Caco-2 (cell line): ENCODE measurements at regions of chr5 and their contacts with region 1.

Region 1: DNA sequence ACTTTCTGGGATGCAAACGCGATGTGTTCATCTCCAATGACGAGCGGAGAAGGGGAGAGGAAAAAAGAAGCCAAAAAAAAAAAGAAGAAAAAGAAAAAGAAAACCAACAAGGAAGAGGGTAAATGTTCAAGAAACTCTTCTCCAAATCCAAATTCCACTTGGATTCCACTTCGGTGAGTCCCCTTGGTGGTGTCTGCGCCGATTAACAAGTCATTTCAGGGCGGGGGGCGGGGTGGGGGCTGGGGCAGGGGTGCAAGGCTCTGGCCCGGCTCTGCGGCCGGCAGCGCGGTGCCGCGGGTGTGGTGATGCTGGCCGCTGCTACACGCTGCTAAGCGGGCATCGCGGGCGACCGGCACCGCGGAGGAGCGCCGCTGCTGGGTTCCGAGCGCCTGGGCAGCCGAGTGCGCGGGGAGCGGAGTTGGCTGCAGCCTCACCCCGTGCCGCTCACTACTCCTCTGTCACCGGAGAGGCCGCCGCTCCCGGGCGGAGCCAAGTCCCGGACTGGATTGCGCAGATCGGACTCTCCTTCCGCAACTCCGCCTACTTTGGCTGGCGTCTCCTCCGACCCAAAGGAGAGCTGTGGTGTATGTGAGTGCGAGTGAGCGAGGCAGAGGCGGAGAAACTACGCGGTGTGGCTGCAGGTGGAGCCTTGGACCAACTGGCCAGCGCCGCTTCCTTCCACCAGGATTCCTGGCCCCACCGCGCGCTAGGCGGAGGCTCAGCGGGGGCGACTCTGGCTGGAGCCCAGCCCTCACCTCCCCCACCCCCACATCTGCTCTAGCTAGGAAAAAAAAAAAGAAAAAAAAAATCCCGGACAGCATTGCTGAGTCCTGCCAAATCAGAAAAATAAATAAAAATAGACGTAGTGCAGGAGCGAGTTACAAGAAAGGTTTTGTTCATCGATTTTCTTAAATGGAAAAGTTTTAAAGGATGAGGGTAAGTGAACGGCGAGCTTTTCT is at the start of gene SEMA6A:
- DNase-seq: peak; percentile 92 to 93
- H3K4me3 ChIP-seq: peak within 1 kb of the TSS; percentile 61
- H3K4me3 Mint-ChIP-seq: peak within 1 kb of the TSS; percentile 92
- H3K27ac Mint-ChIP-seq: peak within 1 kb of the TSS; percentile 45
- H3K4me1 ChIP-seq: peaks cover 20% of the 10 kb centered on the region
- H3K4me1 Mint-ChIP-seq: peaks cover 21% of the 10 kb centered on the region
- H3K27me3 ChIP-seq: no peaks in the 10 kb centered on the region; the same call in 1 of the 2 replicates
- H3K27me3 Mint-ChIP-seq: peaks cover 2% of the 10 kb centered on the region
- CTCF ChIP-seq: no peak
- total RNA-seq, gene SEMA6A: 18.3 and 26.3 TPM in 2 replicates

Region 2: GRCh38 chr5:116546033-116546728 is 28.5 kb before region 1 on chr5:
- CTCF ChIA-PET with region 1: no interaction called
- POLR2A ChIA-PET with region 1: no interaction called
- intact Hi-C with region 1: loop called (anchors 1 kb)
- DNase-seq: peak; percentile 82 to 91
- H3K4me3 ChIP-seq: no peak overlapping the region
- H3K4me3 Mint-ChIP-seq: peak overlapping the region; percentile 16
- H3K27ac Mint-ChIP-seq: peak overlapping the region; percentile 38
- H3K4me1 ChIP-seq: peaks cover 46% of the 10 kb centered on the region
- H3K4me1 Mint-ChIP-seq: peaks cover 33% of the 10 kb centered on the region
- H3K27me3 ChIP-seq: no peaks in the 10 kb centered on the region
- H3K27me3 Mint-ChIP-seq: no peaks in the 10 kb centered on the region
- CTCF ChIP-seq: no peak

Region 3: DNA sequence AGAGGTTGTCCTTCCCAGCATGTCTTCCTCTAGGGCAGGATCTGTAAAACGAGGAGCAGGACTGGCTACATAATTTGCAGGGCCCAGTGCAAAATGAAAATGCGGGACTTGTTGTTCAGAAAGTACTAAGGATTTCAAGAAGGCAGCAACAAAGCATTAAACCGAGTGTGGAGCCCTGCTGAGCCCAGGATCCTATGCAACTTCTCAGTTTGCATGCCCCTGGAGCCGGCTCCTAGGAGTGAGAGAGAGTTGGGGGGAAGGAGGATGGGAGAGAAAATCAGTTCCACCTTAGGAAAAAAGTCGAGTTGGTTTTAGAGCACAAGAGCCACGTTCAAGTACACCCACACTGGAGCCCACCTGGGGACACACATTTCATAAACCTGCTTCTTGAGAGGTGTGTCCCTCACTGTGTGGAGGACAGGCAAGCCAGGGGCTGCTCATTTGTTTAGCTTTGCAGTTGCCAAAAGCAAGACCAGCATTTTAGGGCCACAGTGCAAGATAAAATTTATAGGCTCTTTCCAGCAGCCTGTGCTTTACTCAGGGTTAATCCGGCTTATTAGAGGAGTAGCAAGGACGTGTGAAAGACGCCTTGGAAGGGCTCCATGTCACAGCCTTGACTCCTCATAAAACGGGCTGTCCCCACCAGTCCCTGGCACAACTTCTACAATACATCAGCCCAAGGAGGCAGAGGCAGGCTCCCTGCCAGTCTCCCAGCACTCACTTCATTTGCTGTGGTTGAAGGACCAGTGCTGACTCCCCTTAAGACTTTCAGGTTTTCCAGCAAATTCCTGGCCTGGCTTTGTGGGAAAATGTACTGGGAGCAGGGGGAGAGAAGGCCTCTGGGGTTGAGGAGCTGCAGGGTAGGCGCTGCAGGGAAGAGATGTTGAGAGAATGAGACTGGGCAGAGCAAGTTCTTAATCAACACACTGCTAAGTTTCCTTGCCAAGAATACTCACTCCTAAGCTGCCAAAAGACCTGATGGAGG is 159.6 kb after region 1 on chr5:
- CTCF ChIA-PET with region 1: no interaction called
- POLR2A ChIA-PET with region 1: no interaction called
- intact Hi-C with region 1: loop called (anchors 5 kb)
- DNase-seq: no peak
- H3K4me3 ChIP-seq: no peak overlapping the region
- H3K4me3 Mint-ChIP-seq: no peak overlapping the region
- H3K27ac Mint-ChIP-seq: no peak overlapping the region
- H3K4me1 ChIP-seq: peaks cover 15% of the 10 kb centered on the region
- H3K4me1 Mint-ChIP-seq: peaks cover 8% of the 10 kb centered on the region
- H3K27me3 ChIP-seq: no peaks in the 10 kb centered on the region
- H3K27me3 Mint-ChIP-seq: no peaks in the 10 kb centered on the region
- CTCF ChIP-seq: no peak

Region 4: DNA sequence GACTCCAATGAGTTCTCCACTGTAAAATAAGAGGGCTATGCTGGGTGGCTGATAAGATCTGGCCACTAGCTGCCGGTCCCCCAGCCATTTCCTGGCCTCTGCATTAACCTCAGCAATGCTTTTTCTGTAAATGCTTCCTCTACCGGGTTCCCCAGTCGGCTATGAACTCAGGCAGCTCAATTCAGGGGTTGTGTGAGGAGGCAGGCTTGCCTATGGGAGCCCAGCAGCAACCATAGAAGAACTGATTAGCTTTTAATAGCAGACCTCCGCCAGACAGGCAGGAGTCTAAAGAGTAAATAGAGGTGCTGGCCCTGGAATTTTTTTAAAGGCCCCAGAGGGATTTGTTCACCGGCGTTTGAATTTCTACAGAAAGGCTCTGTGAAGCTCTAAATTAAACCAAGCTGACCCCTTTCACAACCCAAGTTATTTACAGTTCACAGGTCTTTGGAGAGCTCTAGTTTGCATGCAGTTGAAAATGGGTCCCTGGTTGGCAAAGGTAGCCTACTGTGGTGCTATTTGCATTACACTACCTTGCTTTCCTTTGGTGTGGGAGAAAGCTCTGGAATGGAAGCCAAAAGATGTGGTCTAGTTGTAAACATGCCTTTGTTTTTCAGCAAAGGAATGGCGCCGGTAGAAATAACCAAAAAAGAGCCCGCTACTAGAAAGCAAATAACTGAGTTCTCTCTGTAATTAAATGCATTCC is 289.6 kb after region 1 on chr5:
- CTCF ChIA-PET with region 1: no interaction called
- POLR2A ChIA-PET with region 1: no interaction called
- intact Hi-C with region 1: loop called (anchors 5 kb)
- DNase-seq: peak; percentile 49 to 51
- H3K4me3 ChIP-seq: no peak overlapping the region
- H3K4me3 Mint-ChIP-seq: no peak overlapping the region
- H3K27ac Mint-ChIP-seq: peak overlapping the region; percentile 43
- H3K4me1 ChIP-seq: peaks cover 34% of the 10 kb centered on the region
- H3K4me1 Mint-ChIP-seq: peaks cover 24% of the 10 kb centered on the region
- H3K27me3 ChIP-seq: no peaks in the 10 kb centered on the region
- H3K27me3 Mint-ChIP-seq: no peaks in the 10 kb centered on the region
- CTCF ChIP-seq: no peak